ENCODE measurements at regions of chr1 and their contacts with region 1.

Region 1: GRCh38 chr1:173429471-173430402 is 47.4 kb upstream of the PRDX6 start:
- DNase-seq: peak; percentile 40
- ATAC-seq: peak; percentile 91
- H3K4me3 ChIP-seq: peak overlapping the region in 1 of 2 experiments; percentile 40; a peak in 3 of 4 replicates
- H3K27ac ChIP-seq: peak overlapping the region; percentile 36
- H3K4me1 ChIP-seq: peaks cover 23 to 60% of the 10 kb centered on the region in 2 experiments
- H3K27me3 ChIP-seq: no peaks in the 10 kb centered on the region
- CTCF ChIP-seq: 0 out of 6 replicates have a peak, but pooled peaks of 1 of the 3 experiments have one; percentile 8
- POLR2A ChIP-seq: no peak
- RAD21 ChIP-seq: peak; percentile 7; the same call in 1 of the 2 replicates

Region 2: DNA sequence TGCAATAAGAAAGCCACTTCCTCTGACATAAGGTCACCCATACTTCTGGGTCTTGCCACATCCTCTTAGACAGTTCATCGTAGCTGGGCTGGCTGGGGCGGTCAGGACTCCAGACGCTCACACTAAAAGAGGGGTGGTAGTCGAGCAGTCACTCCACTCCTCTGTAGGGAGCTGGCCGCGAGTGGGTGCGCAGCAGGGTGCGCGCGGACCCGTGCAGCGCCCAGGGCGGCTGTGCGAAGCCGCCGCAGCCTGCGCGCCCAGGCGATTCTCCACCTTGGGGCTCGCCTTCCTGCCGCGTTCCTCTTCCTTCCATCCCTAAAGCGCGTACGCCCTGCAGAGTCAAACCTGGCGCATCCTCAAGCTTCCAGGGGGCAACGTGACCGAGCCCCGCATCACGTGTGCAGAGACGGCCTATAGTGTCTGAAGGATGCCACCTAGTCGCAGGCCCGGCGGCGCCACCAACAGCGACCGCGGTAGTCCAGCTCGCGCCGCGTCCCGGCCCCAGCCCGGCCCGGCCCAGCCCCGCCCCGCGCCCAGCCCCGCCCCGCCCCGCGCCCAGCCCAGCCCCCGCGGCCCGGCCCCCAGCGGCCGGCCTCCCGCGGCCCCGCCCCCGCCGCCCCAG is 47.0 kb after region 1 on chr1:
- CTCF ChIA-PET with region 1: no interaction called
- POLR2A ChIA-PET with region 1: no interaction called
- RAD21 ChIA-PET with region 1: no interaction called
- intact Hi-C with region 1: loop called (anchors 5 kb)
- DNase-seq: peak; percentile 85
- ATAC-seq: peak; percentile 95
- H3K4me3 ChIP-seq: peak overlapping the region; percentile 81 to 90
- H3K27ac ChIP-seq: peak overlapping the region; percentile 67
- H3K4me1 ChIP-seq: peaks cover 10 to 36% of the 10 kb centered on the region in 2 experiments
- H3K27me3 ChIP-seq: no peaks in the 10 kb centered on the region
- CTCF ChIP-seq: no peak
- POLR2A ChIP-seq: peak; percentile 75
- RAD21 ChIP-seq: no peak

Region 3: GRCh38 chr1:173824331-173825081 is 394.8 kb after region 1 on chr1 and contains the starts of genes CENPL and DARS2:
- CTCF ChIA-PET with region 1: interaction called, 9 read pairs
- POLR2A ChIA-PET with region 1: interaction called, 4 read pairs
- RAD21 ChIA-PET with region 1: interaction called in 1 of 2 experiments, 4 read pairs
- intact Hi-C with region 1: loop called (anchors 1 kb)
- DNase-seq: peak; percentile 96
- ATAC-seq: peak; percentile 89
- H3K4me3 ChIP-seq: peak within 1 kb of the TSS; percentile 96 to 97
- H3K27ac ChIP-seq: peak within 1 kb of the TSS; percentile 82
- H3K4me1 ChIP-seq: peaks cover 2 to 7% of the 10 kb centered on the region in 2 experiments; a peak in 2 of 4 replicates
- H3K27me3 ChIP-seq: no peaks in the 10 kb centered on the region
- CTCF ChIP-seq: no peak
- POLR2A ChIP-seq: peak; percentile 26
- RAD21 ChIP-seq: no peak
- total RNA-seq, gene CENPL: 20.3 TPM
- total RNA-seq, gene DARS2: 25.6 TPM

Region 4: DNA sequence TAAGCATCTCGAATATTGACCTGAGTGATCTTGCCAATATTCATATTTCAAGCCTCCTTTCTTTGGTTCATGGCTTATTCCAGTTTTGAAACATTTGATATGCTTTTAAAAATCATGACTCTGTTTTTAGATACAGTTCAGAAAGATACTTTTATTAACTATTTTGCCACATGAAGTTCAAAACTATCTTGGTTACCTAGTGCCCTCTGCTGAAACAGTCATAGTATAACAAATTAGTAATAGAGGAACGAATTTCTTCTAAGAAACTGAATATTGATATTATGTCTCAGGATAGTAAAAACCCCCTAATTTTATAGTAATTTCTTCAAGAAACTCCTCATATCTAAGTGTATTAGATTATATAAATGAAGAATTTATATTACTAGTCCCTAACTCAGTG is 645.0 kb after region 1 on chr1:
- CTCF ChIA-PET with region 1: no interaction called
- POLR2A ChIA-PET with region 1: no interaction called
- RAD21 ChIA-PET with region 1: no interaction called
- intact Hi-C with region 1: loop called (anchors 2 kb)
- DNase-seq: no peak
- ATAC-seq: peak; percentile 66; the same call in 1 of the 2 replicates
- H3K4me3 ChIP-seq: no peak overlapping the region
- H3K27ac ChIP-seq: no peak overlapping the region
- H3K4me1 ChIP-seq: peaks cover 0 to 7% of the 10 kb centered on the region in 2 experiments; a peak in 2 of 4 replicates
- H3K27me3 ChIP-seq: no peaks in the 10 kb centered on the region
- CTCF ChIP-seq: peak; percentile 18 to 71 (median 57); a peak in 3 of 6 replicates
- POLR2A ChIP-seq: no peak
- RAD21 ChIP-seq: peak; percentile 81

Region 5: DNA sequence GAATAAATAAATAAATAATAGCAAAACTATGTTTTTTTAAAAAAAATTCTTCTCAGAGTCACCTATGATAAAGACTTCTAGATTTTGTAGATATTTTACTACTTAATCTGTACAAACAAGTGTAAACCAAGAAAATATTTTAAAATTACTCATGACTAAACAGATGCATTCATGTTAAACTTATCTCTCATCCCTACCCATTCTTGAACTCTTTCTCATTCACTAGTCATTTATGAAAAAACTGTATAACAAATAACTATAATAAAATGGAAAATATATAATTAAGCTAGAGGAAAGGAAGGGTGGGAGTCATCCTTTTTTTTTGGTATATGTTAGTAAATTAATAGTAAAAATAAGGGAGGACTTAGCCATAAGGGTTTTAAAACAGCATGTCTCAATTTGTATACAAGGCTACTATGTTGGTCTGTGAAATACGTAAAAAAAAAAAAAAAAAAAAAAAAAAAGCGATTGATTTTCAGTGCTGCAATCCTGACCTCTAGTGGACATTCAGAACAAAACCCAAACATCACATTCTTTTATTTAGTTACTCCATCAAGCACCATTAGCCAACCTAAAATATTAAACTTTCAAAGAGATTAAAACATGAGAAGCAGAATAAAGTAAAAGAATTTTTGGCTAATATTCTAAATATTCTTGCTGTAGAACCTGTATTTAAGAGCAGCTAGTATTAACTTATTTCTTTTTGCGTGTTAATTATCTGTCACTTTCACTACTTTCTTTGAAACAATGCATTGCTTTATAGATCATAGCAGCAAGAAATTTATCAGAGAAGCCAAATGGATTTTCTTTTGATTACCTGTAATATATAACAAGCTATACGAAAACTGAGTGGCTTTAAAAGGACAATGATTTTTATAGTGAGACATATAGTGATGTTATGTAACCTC is 1314.2 kb after region 1 on chr1:
- CTCF ChIA-PET with region 1: interaction called, 4 read pairs
- POLR2A ChIA-PET with region 1: no interaction called
- RAD21 ChIA-PET with region 1: no interaction called
- intact Hi-C with region 1: loop called (anchors 2 kb)
- DNase-seq: peak; percentile 28
- ATAC-seq: no peak; the same call in 1 of the 2 replicates
- H3K4me3 ChIP-seq: no peak overlapping the region
- H3K27ac ChIP-seq: no peak overlapping the region
- H3K4me1 ChIP-seq: no peaks in the 10 kb centered on the region
- H3K27me3 ChIP-seq: no peaks in the 10 kb centered on the region
- CTCF ChIP-seq: peak; percentile 53 to 75 (median 60); a peak in 5 of 6 replicates
- POLR2A ChIP-seq: no peak
- RAD21 ChIP-seq: peak; percentile 78

Measured in HCT116 (cell line).